Sciatic nerve (tissue), 2 donors: ENCODE measurements at regions of chr7 and their contacts with region 1.

Region 1: DNA sequence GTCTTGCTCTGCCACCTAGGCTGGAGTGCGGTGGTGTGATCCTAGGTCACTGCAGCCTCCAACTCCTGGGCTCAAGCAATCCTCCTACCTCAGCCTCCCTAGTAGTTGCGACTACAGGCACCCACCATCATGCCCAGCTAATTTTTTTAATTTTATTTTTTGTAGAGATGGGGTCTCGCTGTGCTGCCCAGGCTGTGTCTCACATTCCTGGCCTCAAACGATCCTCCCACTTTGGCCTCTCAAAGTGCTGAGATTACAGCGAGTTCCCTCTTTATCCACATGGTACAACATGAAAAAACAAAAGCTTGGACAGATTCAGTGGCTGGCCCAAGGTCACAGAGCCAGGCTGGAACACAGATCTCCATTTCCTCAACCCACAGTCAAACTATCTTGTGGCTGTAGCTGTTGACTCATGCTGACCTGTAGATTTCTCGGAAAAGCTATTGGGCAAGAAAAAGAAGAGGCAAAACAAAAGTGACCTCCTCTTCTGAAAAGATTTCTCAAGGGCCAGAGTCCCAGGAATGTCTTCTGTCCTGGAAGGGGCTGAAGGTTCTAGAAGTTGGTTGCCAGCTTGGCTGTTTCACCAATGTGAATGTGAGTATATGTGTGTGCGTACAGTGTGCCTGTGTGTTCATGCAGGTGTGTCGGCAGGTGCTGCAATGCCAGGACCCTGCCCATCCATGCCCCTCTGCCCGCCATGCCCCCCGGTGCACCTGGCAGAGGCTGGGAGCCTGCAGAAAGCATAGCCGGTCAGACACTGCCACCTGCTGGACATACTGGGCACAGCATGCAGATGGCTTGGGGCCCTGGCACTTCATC is 28.4 kb downstream of the TMEM130 start:
- DNase-seq: peak; percentile 84
- ATAC-seq: peak; percentile 88

Region 2: DNA sequence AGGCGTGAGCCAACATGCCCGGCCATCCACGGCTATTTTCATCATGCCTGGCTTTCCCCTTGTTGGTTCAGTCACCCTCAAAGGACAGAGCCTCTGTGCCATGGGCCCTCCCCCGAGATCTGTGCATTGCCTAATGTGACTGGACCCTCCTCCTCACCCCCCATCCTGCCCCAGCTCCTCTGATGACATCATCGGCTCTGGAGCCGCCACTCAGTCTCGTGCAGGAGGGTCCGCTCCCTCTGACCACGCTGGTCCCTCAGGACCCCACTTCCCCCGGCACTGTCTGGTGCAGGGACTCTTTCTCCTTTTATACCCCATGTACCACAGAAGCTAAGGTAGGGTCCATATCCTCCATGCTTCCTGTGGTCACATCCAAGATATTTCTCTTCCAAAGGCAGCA is 407.3 kb before region 1 on chr7:
- intact Hi-C with region 1: loop called (anchors 5 kb)
- DNase-seq: no peak
- ATAC-seq: no peak